Heart left ventricle (tissue), 16 donors: ENCODE measurements at regions of chr12 and their contacts with region 1.

Region 1: DNA sequence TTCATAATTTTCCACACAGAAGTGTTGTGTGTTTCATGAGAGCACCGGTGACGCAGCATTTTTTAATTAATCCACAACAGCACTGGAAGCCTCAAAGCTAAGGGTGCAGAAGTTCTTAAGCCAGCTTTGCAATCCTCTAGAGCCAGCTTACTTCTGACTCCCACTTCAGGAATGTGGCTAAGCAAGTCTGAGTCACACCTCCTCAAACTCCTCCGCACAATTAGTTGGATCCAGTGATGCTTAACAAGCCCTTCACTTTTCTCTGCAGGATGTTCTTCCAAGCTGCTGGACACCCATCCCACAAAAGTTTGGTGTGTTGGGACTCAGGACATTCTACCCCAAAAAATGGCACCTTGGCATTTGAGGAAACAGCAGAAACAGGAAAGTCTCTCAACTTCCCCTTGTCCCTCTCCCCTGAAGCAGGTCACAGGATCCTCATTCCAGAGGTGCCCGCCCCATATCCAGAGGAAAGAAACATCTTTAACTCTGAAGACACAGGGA is 210.0 kb downstream of the PPM1H start:
- DNase-seq: peak in 1 of 5 donors; percentile 37
- ATAC-seq: peak in 3 of 4 donors; percentile 68 to 90 (median 82)
- H3K4me3 ChIP-seq: no peak overlapping the region
- H3K27ac ChIP-seq: peak overlapping the region in 2 of 12 donors; percentile 19 to 56
- H3K4me1 ChIP-seq: peaks cover 0 to 45% (median 13%) of the 10 kb centered on the region in 12 donors
- H3K27me3 ChIP-seq: no peaks in the 10 kb centered on the region
- CTCF ChIP-seq: no peak
- POLR2A ChIP-seq: no peak

Region 2: DNA sequence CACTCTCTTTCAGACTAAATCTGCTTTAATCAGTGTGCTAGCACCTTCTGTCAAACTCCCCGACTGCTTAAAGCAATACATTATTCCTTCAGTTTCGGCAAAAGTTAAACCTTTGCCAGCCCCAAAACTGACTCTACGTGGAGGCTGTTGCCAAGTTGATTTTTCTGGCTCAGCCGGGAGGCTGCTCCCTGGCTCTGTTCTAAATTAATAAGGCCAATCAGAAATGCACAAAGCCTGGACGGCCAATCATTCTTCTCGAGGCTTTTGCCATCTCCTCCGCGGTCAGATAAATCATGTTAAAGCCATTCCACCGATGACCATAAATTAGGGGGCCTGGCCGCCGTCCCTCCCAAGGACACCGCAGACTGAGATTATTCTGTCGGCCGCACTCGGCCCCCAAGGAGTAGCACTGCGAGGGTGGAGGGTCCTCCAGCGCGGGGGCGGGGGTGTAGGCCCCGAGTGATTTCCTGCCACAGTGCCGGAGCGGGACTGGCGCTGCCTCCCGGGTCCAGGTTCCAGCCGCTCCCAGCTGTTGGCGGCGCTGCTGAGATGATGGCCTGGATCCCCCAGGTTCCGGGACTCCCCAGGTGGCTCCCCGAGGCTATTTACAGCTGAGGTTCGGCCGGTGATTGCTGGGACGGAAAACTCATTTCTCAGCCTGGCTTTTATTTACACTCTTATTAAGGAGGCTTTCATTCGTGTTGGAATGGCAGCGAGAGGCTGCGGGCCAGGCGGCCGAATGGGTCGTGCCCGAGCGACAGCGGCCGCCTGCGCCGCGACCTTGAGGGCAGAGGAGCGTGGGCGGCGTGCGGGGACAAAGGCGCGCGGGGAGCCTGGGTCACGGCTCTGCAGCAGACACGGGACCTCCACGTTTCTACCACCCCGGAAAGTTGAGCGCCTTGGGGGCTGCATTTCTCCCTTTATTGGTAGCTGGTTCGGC is 93.3 kb before region 1 on chr12:
- intact Hi-C with region 1: loop called in 1 of 10 experiments (anchors 5 kb)
- DNase-seq: peak; percentile 67 to 81 (median 76)
- ATAC-seq: peak; percentile 75 to 93 (median 88)
- H3K4me3 ChIP-seq: peak overlapping the region; percentile 48 to 73 (median 62)
- H3K27ac ChIP-seq: peak overlapping the region in 11 of 12 donors; percentile 47 to 80 (median 72)
- H3K4me1 ChIP-seq: peaks cover 0 to 23% (median 7%) of the 10 kb centered on the region in 12 donors
- H3K27me3 ChIP-seq: peaks cover 0 to 22% (median 0%) of the 10 kb centered on the region in 9 donors
- CTCF ChIP-seq: peak in 9 of 12 donors; percentile 20 to 60 (median 42)
- POLR2A ChIP-seq: peak in 1 of 2 donors; percentile 40

Region 3: DNA sequence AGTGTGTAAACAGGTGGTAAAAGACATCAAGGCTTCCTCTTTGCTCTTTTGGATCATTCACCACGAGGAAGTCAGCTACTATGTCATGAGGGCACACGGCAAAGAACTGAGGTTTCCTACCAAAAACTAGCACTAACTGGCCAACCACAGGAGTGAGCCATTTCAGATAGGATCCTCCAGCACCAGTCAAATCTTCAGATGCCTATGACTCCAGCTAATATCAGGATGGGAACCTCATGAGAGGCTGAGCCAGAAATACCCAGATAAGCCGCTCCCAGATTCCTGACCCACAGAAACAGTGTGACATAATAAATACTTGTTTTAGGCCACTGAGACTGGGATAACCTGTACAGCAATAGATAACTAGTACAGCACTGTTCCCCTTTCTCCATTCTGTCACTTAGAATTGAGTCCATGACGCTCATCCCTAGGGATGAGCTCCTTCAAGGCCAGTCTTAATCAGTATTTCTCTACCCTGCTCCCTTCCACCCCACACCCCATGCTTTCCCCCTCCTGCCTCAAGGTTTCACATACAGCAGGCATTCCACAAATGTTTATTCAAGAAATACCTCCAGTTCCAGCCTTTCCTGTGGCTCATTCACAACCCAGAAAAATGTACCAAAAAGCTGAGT is 141.6 kb after region 1 on chr12:
- intact Hi-C with region 1: no loop called
- DNase-seq: no peak
- ATAC-seq: peak in 3 of 4 donors; percentile 33 to 47 (median 36)
- H3K4me3 ChIP-seq: no peak overlapping the region
- H3K27ac ChIP-seq: peak overlapping the region in 11 of 12 donors; percentile 10 to 63 (median 41)
- H3K4me1 ChIP-seq: peaks cover 6 to 48% (median 34%) of the 10 kb centered on the region in 12 donors
- H3K27me3 ChIP-seq: no peaks in the 10 kb centered on the region
- CTCF ChIP-seq: no peak
- POLR2A ChIP-seq: no peak

Region 4: DNA sequence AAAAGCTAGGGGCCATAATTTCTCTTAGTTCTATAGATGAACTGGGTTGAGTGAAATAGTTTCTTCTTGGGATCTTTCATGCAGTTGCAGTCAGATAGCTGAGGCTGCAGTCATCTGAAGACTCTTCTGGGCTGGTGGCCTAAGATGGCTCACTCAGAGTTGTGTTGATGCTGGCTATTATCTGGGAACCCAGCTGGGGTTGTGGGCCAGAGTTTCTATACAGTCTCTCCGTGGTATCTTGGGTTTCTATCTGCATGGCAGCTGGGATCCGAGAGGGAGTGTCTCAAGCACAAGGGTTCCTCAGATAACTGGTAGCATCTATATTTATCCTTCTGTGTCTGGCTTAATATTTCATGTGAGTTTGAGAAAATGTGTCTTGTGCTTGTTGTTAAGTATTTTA is 404.9 kb after region 1 on chr12:
- intact Hi-C with region 1: no loop called
- DNase-seq: no peak
- ATAC-seq: no peak
- H3K4me3 ChIP-seq: no peak overlapping the region
- H3K27ac ChIP-seq: no peak overlapping the region
- H3K4me1 ChIP-seq: no peaks in the 10 kb centered on the region
- H3K27me3 ChIP-seq: peaks cover 0 to 4% (median 0%) of the 10 kb centered on the region in 9 donors
- CTCF ChIP-seq: no peak
- POLR2A ChIP-seq: no peak